ENCODE measurements at regions of chr5 and their contacts with region 1.

Region 1: DNA sequence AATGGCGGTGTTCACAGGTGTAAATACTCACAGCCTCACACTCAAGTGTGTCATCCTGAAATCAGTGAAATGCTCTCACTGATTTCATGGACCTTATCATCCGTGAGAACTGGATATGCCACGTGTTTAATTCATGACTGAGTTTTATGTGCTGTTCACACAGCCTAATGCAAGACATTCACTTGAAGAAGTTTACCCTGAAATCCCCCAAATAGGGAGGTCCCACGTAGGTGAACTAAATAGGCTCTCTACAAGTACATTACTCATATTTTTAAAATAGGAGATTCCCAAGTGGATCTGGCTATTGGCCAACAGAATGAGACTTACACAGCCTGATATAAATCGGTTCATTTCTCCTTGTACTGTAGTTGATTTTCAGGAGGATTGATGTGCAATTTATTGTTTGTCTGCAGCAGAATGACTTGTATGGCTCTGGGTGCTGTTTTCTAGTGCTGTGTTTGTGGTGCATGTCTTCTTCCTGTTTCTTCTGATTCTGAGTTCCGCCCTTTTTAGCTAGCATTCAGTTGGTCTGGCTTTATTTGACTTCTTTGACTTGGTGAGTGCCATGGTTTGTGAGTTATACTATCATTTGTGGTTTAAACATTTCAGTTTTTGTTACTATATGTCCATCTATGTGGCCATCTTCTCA is 25.1 kb downstream of the TRIO start:
- DNase-seq: no peak
- ATAC-seq: peak; percentile 61
- H3K4me3 Mint-ChIP-seq: peak overlapping the region; percentile 71
- H3K27ac Mint-ChIP-seq: peak overlapping the region; percentile 85
- H3K4me1 Mint-ChIP-seq: peaks cover 88% of the 10 kb centered on the region
- H3K27me3 Mint-ChIP-seq: no peaks in the 10 kb centered on the region
- CTCF ChIP-seq: no peak

Region 2: DNA sequence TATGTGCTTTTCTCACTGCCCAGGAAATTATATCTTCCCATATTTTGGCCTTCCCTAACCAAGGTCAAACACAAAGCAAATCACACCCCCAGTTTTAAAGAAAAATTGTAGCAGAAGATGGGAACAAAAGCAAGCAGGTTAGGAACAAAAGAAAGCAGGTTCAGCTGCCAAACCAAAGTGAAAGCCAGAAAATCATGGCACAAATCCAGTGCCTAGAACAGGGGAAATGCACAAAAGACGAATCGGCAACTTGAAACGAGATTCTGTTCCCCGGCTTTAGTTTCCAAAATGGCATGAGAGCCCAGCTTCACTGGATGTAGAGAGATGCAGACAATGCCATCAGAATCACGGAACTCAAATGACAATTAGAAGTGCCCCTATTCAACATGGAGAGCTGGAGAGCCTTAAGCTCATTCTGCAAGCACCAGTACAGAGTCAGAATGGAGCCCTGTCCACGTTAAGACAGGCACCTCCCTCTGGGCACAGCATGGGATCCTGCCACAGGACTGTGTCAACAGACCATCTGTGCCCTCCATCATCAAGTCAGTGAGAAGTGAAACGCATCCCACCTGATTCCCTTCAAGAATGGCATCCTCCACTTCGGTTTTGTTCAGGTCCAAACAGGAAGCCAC is 237.6 kb before region 1 on chr5:
- CTCF ChIA-PET with region 1: no interaction called
- POLR2A ChIA-PET with region 1: no interaction called
- intact Hi-C with region 1: no loop called
- DNase-seq: no peak
- ATAC-seq: no peak
- H3K4me3 Mint-ChIP-seq: no peak overlapping the region
- H3K27ac Mint-ChIP-seq: no peak overlapping the region
- H3K4me1 Mint-ChIP-seq: no peaks in the 10 kb centered on the region
- H3K27me3 Mint-ChIP-seq: peaks cover 5% of the 10 kb centered on the region
- CTCF ChIP-seq: no peak

Region 3: GRCh38 chr5:14156650-14157493 is 11.4 kb before region 1 on chr5:
- CTCF ChIA-PET with region 1: interaction called, 4 read pairs
- POLR2A ChIA-PET with region 1: interaction called, 31 read pairs
- intact Hi-C with region 1: loop called (anchors 1 kb)
- DNase-seq: no peak
- ATAC-seq: peak; percentile 72
- H3K4me3 Mint-ChIP-seq: no peak overlapping the region
- H3K27ac Mint-ChIP-seq: no peak overlapping the region
- H3K4me1 Mint-ChIP-seq: peaks cover 34% of the 10 kb centered on the region
- H3K27me3 Mint-ChIP-seq: no peaks in the 10 kb centered on the region
- CTCF ChIP-seq: no peak

Measured in activated B cell treated with CpG ODN at 0.5 μM for 24 hours (primary cell).